Activated B cell treated with CpG ODN at 0.5 μM for 24 hours (primary cell): ENCODE measurements at regions of chr12 and their contacts with region 1.

Region 1: DNA sequence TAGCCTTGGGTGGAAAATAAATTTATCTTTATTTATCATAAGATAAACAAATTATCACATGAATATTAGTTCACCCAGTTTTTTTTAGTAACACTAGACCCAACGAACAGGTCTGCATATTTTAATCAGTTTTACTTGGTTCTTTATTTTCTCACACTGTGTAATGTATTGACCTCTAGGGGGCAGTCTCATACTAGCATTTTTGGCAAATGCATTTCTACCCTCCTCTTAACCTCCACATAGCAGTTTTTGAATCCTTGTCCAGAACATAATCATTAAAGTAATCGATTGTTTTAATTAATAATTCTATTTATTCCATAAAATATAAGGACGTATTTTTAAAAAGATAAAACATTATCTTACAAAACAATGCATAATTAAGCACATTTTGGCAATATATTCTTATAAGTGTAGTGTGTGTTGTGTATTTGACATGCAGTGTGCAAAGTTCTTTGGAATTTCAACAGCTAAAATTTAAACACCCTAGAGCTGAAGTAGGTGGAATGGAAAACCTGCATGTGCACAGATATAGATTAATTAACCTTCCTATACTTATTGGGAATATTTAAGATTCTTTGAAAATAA is 31.6 kb upstream of the PTPRQ start:
- DNase-seq: no peak
- ATAC-seq: no peak
- H3K4me3 Mint-ChIP-seq: no peak overlapping the region
- H3K27ac Mint-ChIP-seq: no peak overlapping the region
- H3K4me1 Mint-ChIP-seq: no peaks in the 10 kb centered on the region
- H3K27me3 Mint-ChIP-seq: no peaks in the 10 kb centered on the region
- CTCF ChIP-seq: no peak

Region 2: DNA sequence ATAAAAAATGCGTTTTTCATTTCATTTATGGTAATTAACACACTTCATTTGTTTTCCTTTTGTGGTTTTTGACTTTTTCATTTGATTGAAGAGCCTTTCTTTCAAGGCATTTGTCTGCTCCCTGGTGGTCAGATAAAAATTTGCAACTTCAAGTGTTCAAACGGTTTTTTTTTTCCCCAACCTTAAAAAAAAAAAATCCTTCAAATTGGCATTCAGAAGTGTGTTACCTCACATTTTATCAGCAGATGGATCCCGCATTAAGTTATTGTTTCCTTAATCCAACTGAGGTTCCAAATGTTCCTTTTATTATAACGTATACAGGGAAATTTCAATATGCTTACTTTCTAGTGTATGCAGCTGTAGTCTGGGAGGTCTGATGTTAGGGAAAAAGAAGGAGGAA is 351.4 kb after region 1 on chr12:
- CTCF ChIA-PET with region 1: no interaction called
- POLR2A ChIA-PET with region 1: no interaction called
- intact Hi-C with region 1: loop called (anchors 10 kb)
- DNase-seq: no peak
- ATAC-seq: no peak
- H3K4me3 Mint-ChIP-seq: no peak overlapping the region
- H3K27ac Mint-ChIP-seq: no peak overlapping the region
- H3K4me1 Mint-ChIP-seq: peaks cover 4% of the 10 kb centered on the region
- H3K27me3 Mint-ChIP-seq: no peaks in the 10 kb centered on the region
- CTCF ChIP-seq: no peak

Region 3: GRCh38 chr12:82326905-82327503 is 1914.5 kb after region 1 on chr12:
- CTCF ChIA-PET with region 1: no interaction called
- POLR2A ChIA-PET with region 1: no interaction called
- intact Hi-C with region 1: loop called (anchors 10 kb)
- DNase-seq: no peak
- ATAC-seq: no peak
- H3K4me3 Mint-ChIP-seq: no peak overlapping the region
- H3K27ac Mint-ChIP-seq: no peak overlapping the region
- H3K4me1 Mint-ChIP-seq: no peaks in the 10 kb centered on the region
- H3K27me3 Mint-ChIP-seq: no peaks in the 10 kb centered on the region
- CTCF ChIP-seq: no peak